ENCODE measurements at regions of chr14 and their contacts with region 1.

Region 1: DNA sequence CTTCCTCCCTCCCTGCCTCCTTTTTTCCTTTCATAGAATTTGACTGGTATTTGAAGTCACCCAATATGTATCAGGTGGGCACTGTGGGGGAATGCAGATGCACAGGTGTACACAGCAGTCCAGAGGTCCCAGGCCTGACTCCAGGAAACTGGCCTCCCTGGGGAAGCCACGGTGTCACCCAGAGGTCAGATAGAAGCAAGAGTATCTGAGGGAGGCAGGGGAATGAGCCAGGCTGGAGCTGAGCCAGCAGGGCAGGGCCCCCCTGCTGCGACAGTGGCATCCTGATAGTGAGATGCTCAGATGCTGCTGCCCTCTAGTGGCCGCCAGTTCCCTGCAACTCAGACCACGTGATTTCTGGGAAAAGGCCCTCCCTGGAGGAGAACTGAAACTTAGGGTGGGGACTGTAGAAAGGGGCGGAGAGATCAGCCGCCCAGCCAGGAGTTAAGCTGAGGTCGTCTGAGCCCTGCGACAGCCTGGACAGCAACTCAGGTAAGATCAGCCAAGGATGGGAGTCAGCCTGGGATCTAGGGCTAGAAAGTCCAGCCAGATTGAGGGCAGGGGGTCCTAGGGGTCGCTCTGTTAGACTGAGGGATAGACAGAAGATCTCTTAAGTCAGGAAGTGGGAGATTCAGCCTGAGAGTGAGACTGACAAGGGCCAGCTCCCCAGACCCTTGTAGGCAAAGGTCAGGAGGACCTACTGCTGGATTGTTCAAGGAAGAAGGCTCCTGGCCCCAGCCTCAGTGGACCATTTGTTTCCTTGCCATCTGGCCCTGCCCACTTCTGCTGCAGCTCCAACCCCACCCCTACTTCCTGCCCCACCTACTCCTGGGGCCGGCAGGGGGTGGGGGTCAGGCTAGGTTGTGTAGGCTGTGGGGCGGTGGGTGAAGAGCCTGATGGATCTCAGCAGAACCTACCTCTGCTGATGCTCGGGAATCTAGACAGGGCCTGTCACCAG is at the start of gene IRF9:
- DNase-seq: peak; percentile 95
- H3K4me3 Mint-ChIP-seq: peak within 1 kb of the TSS; percentile 88
- H3K27ac Mint-ChIP-seq: peak within 1 kb of the TSS; percentile 91
- H3K4me1 Mint-ChIP-seq: peaks cover 11% of the 10 kb centered on the region
- H3K27me3 Mint-ChIP-seq: no peaks in the 10 kb centered on the region
- CTCF ChIP-seq: peak; percentile 84
- total RNA-seq, gene IRF9: 13.6 and 23.8 TPM in 2 replicates

Region 2: GRCh38 chr14:23929822-23930294 is 231.3 kb before region 1 on chr14:
- CTCF ChIA-PET with region 1: no interaction called
- POLR2A ChIA-PET with region 1: no interaction called
- intact Hi-C with region 1: no loop called
- DNase-seq: peak; percentile 80
- H3K4me3 Mint-ChIP-seq: no peak overlapping the region
- H3K27ac Mint-ChIP-seq: no peak overlapping the region
- H3K4me1 Mint-ChIP-seq: no peaks in the 10 kb centered on the region
- H3K27me3 Mint-ChIP-seq: no peaks in the 10 kb centered on the region
- CTCF ChIP-seq: peak; percentile 73

Region 3: DNA sequence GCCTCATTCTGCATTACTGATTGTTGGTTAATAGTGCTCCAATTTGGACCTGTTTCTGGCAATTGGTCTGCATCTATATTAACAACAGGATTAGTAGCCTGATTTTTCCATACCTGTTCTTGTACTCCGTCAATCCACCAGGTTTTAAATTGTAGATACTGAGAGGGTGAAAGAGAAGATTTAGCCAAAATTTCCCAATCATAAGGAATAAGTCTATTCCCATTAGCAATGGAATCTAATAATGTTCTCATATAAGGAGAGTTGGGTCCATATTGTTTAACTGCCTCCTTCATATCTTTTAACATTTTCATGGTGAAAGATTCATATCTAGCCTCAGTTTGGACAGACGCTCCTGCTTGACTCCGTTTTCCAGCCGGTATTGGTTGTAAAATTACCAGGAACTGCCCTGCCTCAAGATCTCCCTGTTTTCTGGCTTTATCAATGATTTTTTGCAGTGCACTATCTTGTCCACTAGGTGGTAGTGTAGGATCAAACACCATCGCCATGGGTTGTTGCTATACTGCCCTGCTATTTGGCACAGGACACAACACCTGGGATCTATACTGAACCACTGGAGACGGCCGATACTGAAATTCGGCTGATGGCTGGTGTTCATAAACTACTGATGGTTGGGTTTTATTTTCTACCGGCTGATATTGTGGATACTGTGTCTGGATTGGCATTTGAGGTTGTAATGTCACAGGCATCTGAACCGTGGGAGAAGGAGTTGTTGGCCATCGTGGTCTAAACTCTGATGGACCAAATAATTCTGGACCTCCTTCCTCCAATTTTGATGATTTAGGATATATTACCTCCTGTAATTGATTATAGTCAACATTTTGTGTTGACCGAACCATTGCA is 147.2 kb before region 1 on chr14:
- CTCF ChIA-PET with region 1: no interaction called
- POLR2A ChIA-PET with region 1: no interaction called
- intact Hi-C with region 1: loop called (anchors 2 kb)
- DNase-seq: peak; percentile 83
- H3K4me3 Mint-ChIP-seq: no peak overlapping the region
- H3K27ac Mint-ChIP-seq: no peak overlapping the region
- H3K4me1 Mint-ChIP-seq: no peaks in the 10 kb centered on the region
- H3K27me3 Mint-ChIP-seq: peaks cover 20% of the 10 kb centered on the region
- CTCF ChIP-seq: peak; percentile 80

Region 4: DNA sequence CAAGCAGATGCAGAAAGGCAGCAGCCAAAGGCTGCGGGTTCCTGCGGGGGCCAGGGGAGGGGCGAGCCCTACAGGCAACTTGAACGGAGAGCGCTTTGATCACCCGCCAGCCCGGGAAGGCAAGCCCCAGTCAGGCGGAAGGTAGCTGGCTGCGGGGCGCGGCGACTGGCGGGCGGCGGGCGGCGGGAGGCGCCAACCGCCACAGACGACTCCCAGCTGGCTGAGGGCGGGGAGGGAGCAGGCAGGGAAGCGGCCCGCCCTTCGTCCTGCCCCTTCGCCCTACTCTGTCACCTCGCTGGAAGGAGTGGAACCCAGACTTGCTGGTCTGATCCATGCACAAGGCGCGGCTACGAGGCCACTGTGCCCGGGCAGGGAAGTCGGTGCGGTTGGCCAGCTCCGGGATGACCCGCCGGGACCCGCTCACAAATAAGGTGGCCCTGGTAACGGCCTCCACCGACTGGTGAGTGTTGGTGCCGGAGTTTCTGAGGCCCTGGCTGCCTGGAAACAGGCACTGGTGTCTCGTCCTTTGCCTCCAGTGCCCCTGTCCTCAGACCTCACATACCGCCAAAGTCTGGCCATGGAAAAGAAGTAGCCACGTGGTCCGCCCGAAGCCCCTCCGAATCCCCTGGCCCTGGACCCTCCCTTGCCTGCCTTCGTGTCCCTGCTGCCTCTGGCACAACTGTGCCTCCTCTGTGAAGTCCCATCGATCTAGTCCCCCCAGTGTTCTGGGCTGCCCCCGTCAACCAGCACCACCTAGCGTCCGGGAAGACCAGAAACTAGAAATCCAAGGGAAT is 124.8 kb before region 1 on chr14:
- CTCF ChIA-PET with region 1: no interaction called
- POLR2A ChIA-PET with region 1: no interaction called
- intact Hi-C with region 1: no loop called
- DNase-seq: peak; percentile 69
- H3K4me3 Mint-ChIP-seq: peak overlapping the region; percentile 76
- H3K27ac Mint-ChIP-seq: peak overlapping the region; percentile 54
- H3K4me1 Mint-ChIP-seq: peaks cover 11% of the 10 kb centered on the region
- H3K27me3 Mint-ChIP-seq: no peaks in the 10 kb centered on the region
- CTCF ChIP-seq: peak; percentile 88

Region 5: DNA sequence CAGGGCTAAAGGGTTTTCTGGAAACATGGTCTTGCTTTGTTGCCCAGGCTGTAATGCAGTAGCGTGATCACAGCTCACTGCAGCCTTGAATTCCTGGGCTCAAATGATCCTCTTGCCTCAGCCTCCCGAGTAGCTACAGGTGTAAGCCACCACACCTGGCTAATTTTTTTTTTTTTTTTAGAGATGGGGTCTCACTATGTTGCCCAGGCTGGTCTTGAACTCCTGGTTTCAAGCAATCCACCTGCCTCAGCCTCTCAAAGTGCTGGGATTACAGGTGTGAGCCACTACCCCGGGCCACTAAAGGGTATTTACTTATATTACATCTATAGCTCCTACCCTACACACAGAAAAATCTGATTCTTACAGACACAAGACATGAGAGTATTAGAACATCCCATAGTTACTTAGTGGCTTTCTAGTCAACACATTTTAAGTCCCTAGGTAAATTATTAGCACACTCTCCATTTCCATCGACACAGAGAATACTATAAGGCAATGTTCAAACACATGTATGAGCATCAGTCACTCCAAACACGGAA is 52.7 kb before region 1 on chr14:
- CTCF ChIA-PET with region 1: interaction called, 48 read pairs
- POLR2A ChIA-PET with region 1: interaction called, 12 read pairs
- intact Hi-C with region 1: no loop called
- DNase-seq: no peak
- H3K4me3 Mint-ChIP-seq: no peak overlapping the region
- H3K27ac Mint-ChIP-seq: no peak overlapping the region
- H3K4me1 Mint-ChIP-seq: peaks cover 11% of the 10 kb centered on the region
- H3K27me3 Mint-ChIP-seq: no peaks in the 10 kb centered on the region
- CTCF ChIP-seq: no peak

Region 6: DNA sequence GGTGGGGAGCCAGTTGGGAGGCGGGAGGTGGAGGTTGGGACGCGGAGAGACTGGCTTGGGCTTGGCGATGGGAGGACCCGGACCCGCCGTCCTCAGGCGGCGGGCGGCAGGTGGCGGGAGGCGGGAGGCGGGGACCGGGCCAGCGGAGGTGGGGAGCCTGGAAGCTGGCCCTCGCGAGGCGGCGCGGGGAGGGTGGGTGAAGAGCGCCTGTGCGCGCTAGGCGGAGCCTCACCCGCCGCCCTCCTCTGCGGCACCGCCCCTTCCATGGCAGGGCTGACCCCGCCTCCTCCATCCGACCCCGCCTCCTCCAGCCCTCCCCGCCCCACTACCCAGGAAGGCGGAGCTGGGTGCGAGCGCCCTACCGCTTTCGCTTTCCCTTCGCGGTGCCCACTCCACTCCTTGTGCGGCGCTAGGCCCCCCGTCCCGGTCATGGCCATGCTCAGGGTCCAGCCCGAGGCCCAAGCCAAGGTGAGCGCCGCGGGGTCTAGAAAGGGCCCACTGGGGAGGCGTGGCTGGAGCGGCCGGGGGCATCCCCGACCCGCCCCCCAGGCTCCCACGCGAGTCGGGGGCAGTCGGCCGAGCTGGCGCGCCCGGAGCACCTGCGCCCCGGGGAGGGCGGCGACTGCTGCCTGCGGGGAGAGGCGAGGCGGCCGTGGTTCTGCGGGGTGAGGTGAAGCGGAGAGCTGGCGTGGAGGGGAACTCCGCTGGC is 25.1 kb before region 1 on chr14 and contains the start of gene PSME1:
- CTCF ChIA-PET with region 1: interaction called, 12 read pairs
- POLR2A ChIA-PET with region 1: interaction called, 16 read pairs
- intact Hi-C with region 1: no loop called
- DNase-seq: peak; percentile 89
- H3K4me3 Mint-ChIP-seq: peak within 1 kb of the TSS; percentile 75
- H3K27ac Mint-ChIP-seq: peak within 1 kb of the TSS; percentile 86
- H3K4me1 Mint-ChIP-seq: peaks cover 42% of the 10 kb centered on the region
- H3K27me3 Mint-ChIP-seq: no peaks in the 10 kb centered on the region
- CTCF ChIP-seq: no peak
- total RNA-seq, gene PSME1: 126 and 135 TPM in 2 replicates

Region 7: GRCh38 chr14:24146978-24147760 is 14.0 kb before region 1 on chr14 and contains the start of gene RNF31:
- CTCF ChIA-PET with region 1: interaction called, 141 read pairs
- POLR2A ChIA-PET with region 1: interaction called, 30 read pairs
- intact Hi-C with region 1: loop called (anchors 2 kb)
- DNase-seq: peak; percentile 99
- H3K4me3 Mint-ChIP-seq: peak within 1 kb of the TSS; percentile 98
- H3K27ac Mint-ChIP-seq: peak within 1 kb of the TSS; percentile 61
- H3K4me1 Mint-ChIP-seq: peaks cover under 1% of the 10 kb centered on the region
- H3K27me3 Mint-ChIP-seq: no peaks in the 10 kb centered on the region
- CTCF ChIP-seq: no peak
- total RNA-seq, gene RNF31: 62.2 and 67.4 TPM in 2 replicates

Region 8: DNA sequence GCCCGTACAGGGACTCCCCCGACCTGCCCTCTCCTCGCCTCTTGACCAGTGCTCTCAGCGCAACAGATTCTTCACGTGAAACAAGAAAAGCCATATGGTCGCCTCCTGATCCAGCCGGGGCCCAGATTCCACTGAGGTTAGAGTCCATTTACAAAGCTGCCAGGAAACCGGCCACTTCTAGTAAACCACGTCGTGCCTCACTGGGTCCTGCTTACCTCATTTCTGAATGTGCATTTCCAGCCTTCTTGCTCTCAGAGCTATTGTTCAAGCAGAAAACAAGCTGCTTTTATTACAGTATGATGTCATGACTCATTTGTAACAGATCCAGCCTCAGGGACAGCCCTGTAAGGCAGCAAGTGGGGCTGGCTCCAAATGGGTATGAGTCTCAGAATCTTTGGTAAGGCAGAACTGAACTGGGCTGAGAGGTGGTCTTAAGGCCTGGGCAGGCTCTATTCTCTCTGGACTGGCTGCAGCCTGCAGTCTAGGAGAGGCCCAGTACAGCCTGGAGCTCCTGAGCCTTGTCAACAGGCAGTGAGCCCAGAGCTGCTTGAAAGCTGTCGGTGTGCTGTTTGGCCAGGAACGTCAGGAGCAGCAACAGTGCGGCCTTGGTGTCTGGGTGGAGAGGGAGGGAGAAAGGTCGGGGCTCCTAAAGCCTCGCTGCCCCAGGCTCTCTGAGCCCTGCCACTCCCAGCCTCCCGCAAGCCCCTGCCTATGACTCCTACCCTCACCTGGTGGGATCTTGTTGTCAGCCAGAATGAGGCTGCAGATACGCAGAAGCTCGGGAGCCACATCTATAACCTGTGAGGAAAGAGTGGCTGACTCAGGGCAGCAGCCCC is 19.1 kb after region 1 on chr14:
- CTCF ChIA-PET with region 1: interaction called, 51 read pairs
- POLR2A ChIA-PET with region 1: no interaction called
- intact Hi-C with region 1: no loop called
- DNase-seq: no peak
- H3K4me3 Mint-ChIP-seq: no peak overlapping the region
- H3K27ac Mint-ChIP-seq: no peak overlapping the region
- H3K4me1 Mint-ChIP-seq: no peaks in the 10 kb centered on the region
- H3K27me3 Mint-ChIP-seq: no peaks in the 10 kb centered on the region
- CTCF ChIP-seq: no peak